Breast epithelium (tissue), 4 donors: ENCODE measurements at regions of chr2 and their contacts with region 1.

Region 1: DNA sequence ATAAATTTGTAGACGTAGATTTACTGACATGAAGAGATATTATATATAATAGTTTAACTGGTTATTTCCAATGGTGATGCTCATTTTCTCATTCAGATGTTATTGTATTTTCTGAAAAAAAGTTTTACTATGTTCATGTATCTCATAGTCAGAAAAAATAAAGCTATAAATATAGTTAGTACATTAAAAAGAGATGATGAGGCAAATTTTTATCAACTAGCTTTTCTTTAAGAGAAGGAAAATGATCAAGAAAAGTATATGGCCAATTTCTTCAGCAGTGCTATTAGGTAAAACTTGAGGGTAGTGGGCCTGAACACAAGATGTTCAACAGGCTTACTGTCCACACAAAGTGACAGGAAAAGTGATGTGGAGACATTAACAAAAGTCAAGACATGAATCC is 11.7 kb downstream of the TTC21B start:
- DNase-seq: no peak
- H3K4me3 ChIP-seq: no peak overlapping the region
- H3K27ac ChIP-seq: no peak overlapping the region
- H3K4me1 ChIP-seq: no peaks in the 10 kb centered on the region
- H3K27me3 ChIP-seq: no peaks in the 10 kb centered on the region
- CTCF ChIP-seq: no peak
- POLR2A ChIP-seq: no peak

Region 2: DNA sequence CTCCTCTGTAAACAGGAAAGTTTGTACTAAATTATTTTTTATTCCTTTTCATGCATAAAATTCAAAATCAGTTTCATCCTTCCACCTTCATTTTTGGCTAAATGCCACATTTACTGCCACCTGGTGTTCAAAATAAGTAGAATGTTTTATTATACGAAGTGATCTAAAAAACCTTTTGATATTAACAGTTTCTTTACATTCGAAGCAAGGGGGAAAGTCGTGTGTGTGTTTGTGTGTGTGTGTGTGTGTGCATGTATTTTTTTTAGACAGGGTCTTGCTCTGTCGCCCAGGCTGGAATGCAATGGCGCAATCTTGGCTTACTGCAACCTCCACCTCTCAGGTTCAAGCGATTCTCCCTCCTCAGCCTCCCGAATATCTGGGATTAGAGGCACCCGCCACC is 442.9 kb after region 1 on chr2:
- intact Hi-C with region 1: loop called (anchors 5 kb)
- DNase-seq: no peak
- H3K4me3 ChIP-seq: no peak overlapping the region
- H3K27ac ChIP-seq: no peak overlapping the region
- H3K4me1 ChIP-seq: no peaks in the 10 kb centered on the region
- H3K27me3 ChIP-seq: no peaks in the 10 kb centered on the region
- CTCF ChIP-seq: peak in 2 of 3 donors; percentile 35 to 50
- POLR2A ChIP-seq: no peak